ENCODE measurements at regions of chr12 and their contacts with region 1.

Region 1: DNA sequence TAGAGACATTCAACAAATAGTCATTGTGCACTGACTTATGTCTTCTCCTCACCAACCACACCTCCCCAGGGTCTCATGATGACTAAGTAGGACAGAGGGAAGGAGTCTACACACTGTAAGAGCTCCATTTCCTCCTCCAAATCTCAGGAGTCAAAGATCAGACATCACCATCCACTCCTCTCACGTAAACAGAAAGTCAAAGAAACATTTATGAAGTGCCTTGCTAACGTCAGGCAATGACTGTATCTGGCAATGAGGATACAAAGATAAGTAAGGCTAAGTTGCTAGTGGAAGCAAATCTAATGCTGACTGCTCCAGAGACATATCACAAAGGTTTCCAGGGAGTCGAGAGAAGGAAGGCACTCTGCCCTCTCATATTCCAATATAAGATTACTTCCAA is 88.9 kb downstream of the SLC2A13 start:
- DNase-seq: no peak
- H3K4me3 ChIP-seq: no peak overlapping the region
- CTCF ChIP-seq: no peak
- POLR2A ChIP-seq: no peak

Region 2: DNA sequence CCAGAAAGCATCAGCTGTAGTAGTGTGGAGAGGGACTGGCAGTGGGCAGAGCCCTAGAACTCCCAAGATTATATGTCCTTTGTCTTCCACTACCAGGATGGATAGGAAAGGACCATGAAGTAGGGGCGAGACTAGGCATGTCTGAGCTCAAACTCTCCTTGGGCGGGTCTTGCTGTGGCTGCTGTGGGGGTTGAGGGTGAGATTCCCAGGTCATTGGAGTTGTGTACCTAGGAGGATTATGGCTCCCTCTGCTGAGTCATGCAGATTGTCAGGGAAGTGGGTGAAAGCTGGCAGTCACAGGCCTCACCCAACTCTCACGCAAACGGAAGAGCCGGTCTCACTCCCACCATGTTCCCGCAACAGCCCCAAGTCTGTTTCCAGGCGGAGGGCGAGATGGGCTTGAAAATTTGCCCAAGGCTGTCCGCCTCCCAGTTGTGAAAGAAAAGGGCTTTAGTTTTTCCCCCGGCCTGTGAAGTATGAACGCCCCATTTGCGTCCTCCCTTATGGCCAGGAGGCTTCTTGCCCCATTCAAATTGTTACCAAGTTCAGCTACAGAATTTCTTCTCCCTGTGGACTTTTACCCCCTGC is 70.5 kb before region 1 on chr12:
- intact Hi-C with region 1: loop called (anchors 2 kb)
- DNase-seq: no peak
- H3K4me3 ChIP-seq: no peak overlapping the region
- CTCF ChIP-seq: no peak
- POLR2A ChIP-seq: no peak

Region 3: GRCh38 chr12:40261937-40262336 is 245.0 kb after region 1 on chr12:
- intact Hi-C with region 1: no loop called
- DNase-seq: no peak
- H3K4me3 ChIP-seq: no peak overlapping the region
- CTCF ChIP-seq: no peak
- POLR2A ChIP-seq: no peak